ENCODE measurements at regions of chr2 and their contacts with region 1.

Region 1: GRCh38 chr2:186862869-186863709 is 14.1 kb upstream of the ZSWIM2 start:
- ATAC-seq: peak in 4 of 8 experiments; percentile 45 to 77 (median 60)
- H3K4me3 ChIP-seq: no peak overlapping the region
- H3K27ac ChIP-seq: no peak overlapping the region
- H3K4me1 ChIP-seq: peaks cover 0 to 2% of the 10 kb centered on the region in 2 donors

Region 2: GRCh38 chr2:187299122-187299906 is 436.2 kb after region 1 on chr2:
- in situ Hi-C with region 1: loop called in 1 of 9 experiments (anchors 25 kb)
- ATAC-seq: peak in 1 of 8 experiments; percentile 14
- H3K4me3 ChIP-seq: no peak overlapping the region
- H3K27ac ChIP-seq: no peak overlapping the region
- H3K4me1 ChIP-seq: peaks cover 0 to 3% of the 10 kb centered on the region in 2 donors

Region 3: DNA sequence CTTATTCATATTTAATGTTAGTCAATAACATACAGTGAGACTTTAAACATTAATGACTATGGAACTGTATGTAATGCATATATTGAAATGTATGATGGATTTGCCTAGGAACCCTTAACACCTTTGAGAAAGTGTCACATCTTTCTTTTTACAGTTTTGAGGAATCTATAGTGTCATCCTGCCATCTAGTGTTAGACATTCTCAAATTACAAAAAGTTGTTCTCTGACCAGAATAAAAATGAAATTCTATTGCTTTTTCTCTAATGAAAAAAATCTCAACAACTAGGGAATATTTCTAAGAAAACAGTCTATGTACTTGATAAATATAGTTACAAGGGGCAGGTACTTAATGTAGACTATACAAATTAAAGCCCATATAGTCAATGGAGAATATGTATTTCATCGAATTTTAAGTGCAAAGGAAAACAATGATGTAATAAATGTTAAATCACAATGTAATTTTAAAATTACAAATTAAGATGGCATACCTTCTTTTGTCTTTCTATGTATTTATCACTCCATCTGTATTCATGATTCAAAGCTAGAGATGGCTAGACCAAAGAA is 590.1 kb after region 1 on chr2:
- in situ Hi-C with region 1: loop called in 6 of 9 experiments (anchors 25 kb)
- ATAC-seq: no peak
- H3K4me3 ChIP-seq: no peak overlapping the region
- H3K27ac ChIP-seq: no peak overlapping the region
- H3K4me1 ChIP-seq: peaks cover 5% of the 10 kb centered on the region in 2 donors